Vagina (tissue), 2 donors: ENCODE measurements at regions of chr4 and their contacts with region 1.

Region 1: GRCh38 chr4:82758701-82759685 is 39.6 kb downstream of the SCD5 start:
- DNase-seq: peak in 1 of 2 donors; percentile 79
- H3K4me3 ChIP-seq: no peak overlapping the region
- H3K27ac ChIP-seq: no peak overlapping the region
- H3K4me1 ChIP-seq: peaks cover 7% of the 10 kb centered on the region
- H3K27me3 ChIP-seq: no peaks in the 10 kb centered on the region
- CTCF ChIP-seq: no peak
- POLR2A ChIP-seq: no peak

Region 2: GRCh38 chr4:80876810-80877209 is 1882.2 kb before region 1 on chr4:
- intact Hi-C with region 1: loop called (anchors 5 kb)
- DNase-seq: no peak
- H3K4me3 ChIP-seq: no peak overlapping the region
- H3K27ac ChIP-seq: no peak overlapping the region
- H3K4me1 ChIP-seq: no peaks in the 10 kb centered on the region
- H3K27me3 ChIP-seq: no peaks in the 10 kb centered on the region
- CTCF ChIP-seq: no peak
- POLR2A ChIP-seq: no peak